Left ventricle myocardium superior (tissue), 1 donor: ENCODE measurements at regions of chr10 and their contacts with region 1.

Region 1: GRCh38 chr10:95246579-95247051 is 44.2 kb downstream of the PDLIM1 start:
- DNase-seq: peak; percentile 77
- ATAC-seq: peak; percentile 53

Region 2: GRCh38 chr10:95287281-95287680 is 40.7 kb after region 1 on chr10:
- intact Hi-C with region 1: loop called (anchors 2 kb)
- DNase-seq: no peak
- ATAC-seq: peak; percentile 9

Region 3: DNA sequence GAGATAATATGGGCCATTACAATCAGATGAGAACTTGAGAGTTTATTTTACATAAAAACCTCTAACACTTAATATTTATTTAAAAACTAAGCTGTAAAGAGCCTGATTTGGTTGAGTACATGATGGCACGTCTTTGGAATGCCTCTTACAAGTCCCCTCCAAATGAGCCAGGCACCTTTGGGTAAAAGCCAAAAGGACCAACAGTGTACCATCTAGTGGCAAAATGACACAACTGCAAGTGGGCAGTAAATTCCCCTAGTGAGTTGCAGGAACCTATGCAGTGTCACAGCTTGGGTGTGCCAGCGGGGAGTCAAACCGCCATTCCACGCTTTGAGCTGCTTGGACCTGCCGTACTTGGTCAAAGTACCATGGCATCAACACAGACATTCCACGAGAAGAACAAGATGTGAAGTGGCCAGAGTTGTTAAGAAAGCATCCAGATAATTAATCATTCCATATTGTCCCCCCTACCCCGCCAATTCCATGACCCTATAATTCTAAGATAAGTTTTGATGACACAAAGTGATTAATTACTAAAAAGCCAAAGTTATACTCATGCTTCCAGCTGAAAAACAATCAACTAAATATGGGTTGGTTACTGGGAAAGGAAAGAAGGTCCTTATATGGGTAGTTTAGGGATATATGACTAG is 199.3 kb after region 1 on chr10:
- intact Hi-C with region 1: no loop called
- DNase-seq: no peak
- ATAC-seq: peak; percentile 60